ENCODE measurements at regions of chr9 and their contacts with region 1.

Region 1: DNA sequence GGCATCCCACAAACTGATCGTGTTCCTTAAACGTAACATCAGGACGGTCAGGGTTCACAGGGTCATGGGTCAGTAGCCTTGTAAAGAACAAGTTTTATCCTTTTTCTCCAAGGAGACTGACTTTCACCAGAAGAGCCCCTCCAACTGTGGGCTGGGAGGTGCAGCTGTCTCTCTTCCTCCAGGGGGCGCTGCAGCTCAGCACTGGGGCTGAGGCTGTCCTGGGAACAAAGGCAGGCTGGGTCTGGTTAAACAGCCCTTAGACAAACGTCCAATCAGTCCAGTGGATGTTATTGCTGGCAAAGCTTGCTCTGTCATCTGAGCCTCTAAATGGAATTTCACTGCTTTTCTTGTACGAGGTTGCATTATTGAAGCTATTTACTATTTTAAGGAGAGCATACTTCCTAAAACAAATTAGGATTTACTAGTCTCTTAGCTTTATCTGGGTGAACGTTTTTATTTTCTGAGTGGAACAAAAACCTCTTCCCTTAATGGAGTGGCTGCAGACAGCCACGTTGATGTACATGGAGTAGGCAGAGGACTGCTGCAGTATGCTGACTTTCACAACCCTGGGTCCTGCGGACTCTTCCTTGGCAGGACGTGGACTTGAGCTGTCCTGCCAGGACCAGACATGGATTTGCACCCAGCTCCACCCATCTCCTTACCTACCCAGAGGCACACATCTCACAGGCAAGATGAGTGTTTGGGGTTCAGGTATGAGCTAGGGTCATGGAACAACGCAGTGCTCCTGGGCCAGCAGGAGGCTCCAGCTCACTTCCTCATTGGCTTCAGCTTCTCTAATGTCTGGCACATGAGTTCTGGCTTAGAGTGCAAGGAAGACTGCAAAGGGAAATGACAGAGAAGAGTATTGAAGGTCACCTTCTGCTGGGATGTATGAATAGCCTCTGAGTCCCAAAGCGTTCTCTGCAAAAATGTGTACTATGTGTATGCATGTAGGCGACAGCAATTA is 7.8 kb downstream of the EXOSC2 start:
- DNase-seq: peak; percentile 60 to 66
- H3K4me3 ChIP-seq: no peak overlapping the region
- H3K27ac ChIP-seq: no peak overlapping the region
- H3K4me1 ChIP-seq: no peaks in the 10 kb centered on the region
- H3K27me3 ChIP-seq: no peaks in the 10 kb centered on the region
- CTCF ChIP-seq: peak; percentile 74 to 81 (median 81)
- POLR2A ChIP-seq: no peak

Region 2: DNA sequence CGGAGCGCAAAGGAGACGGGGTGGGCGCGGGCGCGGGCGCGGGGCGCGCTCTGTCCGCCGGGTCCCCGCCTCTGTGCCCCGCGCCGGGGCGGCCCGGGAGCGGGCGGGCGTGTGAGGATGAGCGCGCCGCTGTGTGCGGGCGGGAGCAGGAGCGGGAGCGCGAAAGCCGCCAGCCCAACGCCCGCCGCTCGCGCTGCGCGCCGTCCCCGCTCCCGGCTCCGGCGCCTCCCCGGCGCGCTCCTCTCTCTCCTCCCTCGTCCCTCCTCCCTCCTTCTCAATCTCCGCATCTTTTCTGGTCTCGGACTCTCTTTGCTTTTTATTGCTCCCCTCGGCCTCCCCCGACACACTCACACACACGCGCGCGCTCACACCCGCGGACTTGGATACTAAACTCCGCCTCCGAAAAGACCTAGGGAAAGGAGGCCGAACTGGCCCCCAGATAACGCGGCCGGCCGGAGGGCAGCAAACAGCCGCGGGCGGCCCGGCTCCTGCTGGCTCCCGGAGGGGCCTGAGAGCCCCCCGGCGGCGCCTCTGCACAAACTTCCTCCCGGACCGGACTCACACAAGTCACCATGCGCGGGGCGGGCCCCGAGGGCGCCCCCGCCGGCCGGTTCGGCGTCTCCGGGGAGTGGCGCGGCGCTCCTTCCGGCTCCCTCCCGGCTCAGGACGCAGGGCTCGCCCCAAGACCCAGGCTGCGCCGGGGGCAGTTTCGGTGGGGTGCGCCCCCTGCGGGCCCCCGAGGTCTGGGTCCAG is 237.5 kb after region 1 on chr9 and contains the start of gene FIBCD1:
- intact Hi-C with region 1: loop called (anchors 5 kb)
- DNase-seq: no peak
- H3K4me3 ChIP-seq: peak within 1 kb of the TSS in 1 of 2 donors; percentile 20
- H3K27ac ChIP-seq: no peak within 1 kb of the TSS
- H3K4me1 ChIP-seq: peaks cover 0 to 27% of the 10 kb centered on the region in 2 donors
- H3K27me3 ChIP-seq: peaks cover 17 to 29% of the 10 kb centered on the region in 2 donors
- CTCF ChIP-seq: no peak
- POLR2A ChIP-seq: no peak
- total RNA-seq, gene FIBCD1: 0.29 TPM in 1 of 4 donors, not detected in the others